ENCODE measurements at regions of chr14 and their contacts with region 1.

Region 1: GRCh38 chr14:91410771-91411536 is 6.7 kb downstream of the CCDC88C start:
- DNase-seq: peak in 1 of 2 donors; percentile 56
- ATAC-seq: peak in 1 of 3 donors; percentile 3
- H3K4me3 ChIP-seq: no peak overlapping the region
- H3K4me3 Mint-ChIP-seq: peak overlapping the region; percentile 90
- H3K27ac ChIP-seq: peak overlapping the region; percentile 80
- H3K27ac Mint-ChIP-seq: peak overlapping the region; percentile 96 to 98
- H3K4me1 ChIP-seq: peaks cover 94% of the 10 kb centered on the region
- H3K4me1 Mint-ChIP-seq: peaks cover 87 to 89% of the 10 kb centered on the region in 2 donors
- H3K27me3 ChIP-seq: no peaks in the 10 kb centered on the region
- H3K27me3 Mint-ChIP-seq: no peaks in the 10 kb centered on the region
- CTCF ChIP-seq: no peak

Region 2: GRCh38 chr14:90742729-90743128 is 668.2 kb before region 1 on chr14:
- intact Hi-C with region 1: no loop called
- DNase-seq: no peak
- ATAC-seq: no peak
- H3K4me3 ChIP-seq: no peak overlapping the region
- H3K4me3 Mint-ChIP-seq: no peak overlapping the region
- H3K27ac ChIP-seq: no peak overlapping the region
- H3K27ac Mint-ChIP-seq: no peak overlapping the region
- H3K4me1 ChIP-seq: no peaks in the 10 kb centered on the region
- H3K4me1 Mint-ChIP-seq: no peaks in the 10 kb centered on the region
- H3K27me3 ChIP-seq: no peaks in the 10 kb centered on the region
- H3K27me3 Mint-ChIP-seq: peaks cover 3 to 13% of the 10 kb centered on the region in 2 donors
- CTCF ChIP-seq: no peak

Region 3: DNA sequence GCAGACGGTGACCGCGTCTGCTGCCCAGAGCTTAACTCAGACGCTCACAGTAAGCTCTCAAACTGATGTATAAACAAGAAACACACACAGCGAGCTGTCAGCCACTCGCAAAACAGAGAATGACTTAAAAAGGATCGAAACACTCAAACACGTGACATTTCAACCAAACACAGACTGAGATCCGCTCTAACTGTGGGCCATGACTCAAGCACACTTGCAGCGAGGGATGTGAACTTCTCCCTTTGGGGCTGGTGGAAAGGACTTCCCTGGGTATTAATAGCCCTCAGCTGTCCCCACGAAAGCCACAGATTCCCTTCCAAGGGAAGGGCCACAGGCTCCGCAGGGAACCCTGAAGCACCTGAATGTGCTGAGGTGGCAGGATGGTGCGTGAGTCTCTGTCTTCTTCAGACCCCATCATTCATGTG is 22.4 kb before region 1 on chr14:
- intact Hi-C with region 1: loop called (anchors 2 kb)
- DNase-seq: peak in 1 of 2 donors; percentile 78
- ATAC-seq: peak; percentile 46 to 71 (median 46)
- H3K4me3 ChIP-seq: no peak overlapping the region
- H3K4me3 Mint-ChIP-seq: peak overlapping the region; percentile 43
- H3K27ac ChIP-seq: peak overlapping the region; percentile 64
- H3K27ac Mint-ChIP-seq: peak overlapping the region; percentile 96 to 98
- H3K4me1 ChIP-seq: peaks cover 98% of the 10 kb centered on the region
- H3K4me1 Mint-ChIP-seq: peaks cover 76 to 88% of the 10 kb centered on the region in 2 donors
- H3K27me3 ChIP-seq: no peaks in the 10 kb centered on the region
- H3K27me3 Mint-ChIP-seq: no peaks in the 10 kb centered on the region
- CTCF ChIP-seq: no peak

Region 4: GRCh38 chr14:91453744-91454143 is 42.8 kb after region 1 on chr14:
- intact Hi-C with region 1: no loop called
- DNase-seq: no peak
- ATAC-seq: no peak
- H3K4me3 ChIP-seq: no peak overlapping the region
- H3K4me3 Mint-ChIP-seq: no peak overlapping the region
- H3K27ac ChIP-seq: no peak overlapping the region
- H3K27ac Mint-ChIP-seq: peak overlapping the region; percentile 39 to 44
- H3K4me1 ChIP-seq: no peaks in the 10 kb centered on the region
- H3K4me1 Mint-ChIP-seq: peaks cover 0 to 6% of the 10 kb centered on the region in 2 donors
- H3K27me3 ChIP-seq: no peaks in the 10 kb centered on the region
- H3K27me3 Mint-ChIP-seq: no peaks in the 10 kb centered on the region
- CTCF ChIP-seq: no peak

Measured in natural killer cell (primary cell).